Thyroid gland (tissue), 4 donors: ENCODE measurements at regions of chr3 and their contacts with region 1.

Region 1: GRCh38 chr3:6468589-6468988 is 392.3 kb upstream of the GRM7 start:
- DNase-seq: no peak
- H3K4me3 ChIP-seq: no peak overlapping the region
- H3K27ac ChIP-seq: no peak overlapping the region
- H3K4me1 ChIP-seq: no peaks in the 10 kb centered on the region
- H3K27me3 ChIP-seq: no peaks in the 10 kb centered on the region
- CTCF ChIP-seq: no peak
- POLR2A ChIP-seq: no peak

Region 2: GRCh38 chr3:6447166-6447801 is 21.3 kb before region 1 on chr3:
- intact Hi-C with region 1: loop called (anchors 2 kb)
- DNase-seq: no peak
- H3K4me3 ChIP-seq: no peak overlapping the region
- H3K27ac ChIP-seq: no peak overlapping the region
- H3K4me1 ChIP-seq: peaks cover 6 to 16% of the 10 kb centered on the region in 2 donors
- H3K27me3 ChIP-seq: no peaks in the 10 kb centered on the region
- CTCF ChIP-seq: no peak
- POLR2A ChIP-seq: no peak